ENCODE measurements at regions of chr1 and their contacts with region 1.

Region 1: GRCh38 chr1:27689423-27690173 is 17.6 kb upstream of the IFI6 start:
- DNase-seq: peak; percentile 60
- ATAC-seq: peak; percentile 88
- H3K4me3 ChIP-seq: peak overlapping the region; percentile 33; the same call in 1 of the 2 replicates
- H3K27ac ChIP-seq: peak overlapping the region; percentile 57
- H3K4me1 ChIP-seq: peaks cover 10% of the 10 kb centered on the region
- H3K27me3 ChIP-seq: no peaks in the 10 kb centered on the region
- CTCF ChIP-seq: no peak
- EP300 ChIP-seq: peak in 1 of 2 experiments; percentile 13; a peak in 1 of 4 replicates
- POLR2A ChIP-seq: no peak
- RAD21 ChIP-seq: no peak

Region 2: DNA sequence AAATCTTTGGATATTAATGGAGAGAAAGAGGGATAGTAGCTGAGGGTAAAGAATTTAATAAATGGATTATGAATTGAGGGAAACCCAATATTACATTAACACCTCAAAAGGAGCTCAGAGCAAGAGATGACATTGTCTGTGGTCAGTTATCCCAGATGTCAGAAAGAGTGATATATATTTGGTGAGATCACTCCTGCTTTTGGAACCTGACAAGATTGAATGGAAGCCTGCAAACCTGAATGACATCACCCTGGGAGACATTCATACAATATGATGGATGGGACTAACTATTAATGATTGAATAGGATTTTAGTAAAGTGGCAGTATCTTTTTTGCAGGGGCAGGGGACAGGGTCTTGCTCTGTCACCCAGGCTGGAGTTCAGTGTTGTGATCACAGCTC is 10.9 kb before region 1 on chr1:
- CTCF ChIA-PET with region 1: interaction called, 3 read pairs
- POLR2A ChIA-PET with region 1: interaction called, 5 read pairs
- RAD21 ChIA-PET with region 1: no interaction called
- SMC1A ChIA-PET with region 1: interaction called, 11 read pairs
- in situ Hi-C with region 1: no loop called
- intact Hi-C with region 1: no loop called
- DNase-seq: no peak
- ATAC-seq: no peak
- H3K4me3 ChIP-seq: no peak overlapping the region
- H3K27ac ChIP-seq: no peak overlapping the region
- H3K4me1 ChIP-seq: no peaks in the 10 kb centered on the region
- H3K27me3 ChIP-seq: no peaks in the 10 kb centered on the region
- CTCF ChIP-seq: no peak
- EP300 ChIP-seq: no peak
- POLR2A ChIP-seq: no peak
- RAD21 ChIP-seq: no peak

Region 3: DNA sequence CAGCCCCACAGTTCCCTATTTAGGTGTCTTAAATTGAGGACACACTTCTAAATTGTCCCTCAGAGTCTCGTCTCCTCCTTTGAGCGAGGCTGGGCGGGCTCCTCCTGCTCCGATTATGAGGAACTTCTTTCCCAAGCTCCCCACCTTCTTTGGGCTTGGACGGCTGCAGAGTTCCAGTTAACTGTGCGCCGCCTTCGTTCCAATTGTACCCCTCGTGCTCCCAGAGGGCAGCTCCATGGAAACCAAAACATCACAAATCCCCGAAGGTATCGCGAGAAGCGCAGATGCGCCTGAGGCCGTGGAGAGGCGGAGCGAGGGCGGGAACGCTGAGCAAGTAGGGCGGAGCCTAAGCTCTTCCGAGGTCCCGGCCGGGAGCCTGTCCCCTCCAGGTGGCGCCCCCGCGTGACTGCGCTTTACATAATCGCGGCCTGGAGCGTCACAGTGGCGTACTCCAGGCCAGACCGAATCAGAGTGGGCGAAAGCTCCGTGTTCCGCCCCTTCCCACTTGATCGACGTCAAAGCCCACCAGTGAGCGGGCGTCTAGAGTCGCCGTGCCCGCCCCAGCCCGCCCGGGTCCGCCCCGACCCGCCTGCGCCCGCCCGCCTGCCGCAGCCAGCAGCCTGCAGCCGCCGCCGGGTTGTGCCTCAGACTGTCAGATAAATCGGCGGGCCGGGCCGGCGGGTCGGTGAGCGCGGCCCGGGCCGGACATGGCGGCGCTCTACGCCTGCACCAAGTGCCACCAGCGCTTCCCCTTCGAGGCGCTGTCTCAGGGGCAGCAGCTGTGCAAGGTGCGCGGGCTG is 36.0 kb after region 1 on chr1 and contains the start of gene FAM76A:
- CTCF ChIA-PET with region 1: interaction called, 5 read pairs
- POLR2A ChIA-PET with region 1: interaction called, 6 read pairs
- RAD21 ChIA-PET with region 1: interaction called, 12 read pairs
- SMC1A ChIA-PET with region 1: interaction called, 8 read pairs
- in situ Hi-C with region 1: no loop called
- intact Hi-C with region 1: no loop called
- DNase-seq: peak; percentile 97
- ATAC-seq: peak; percentile 98
- H3K4me3 ChIP-seq: peak within 1 kb of the TSS; percentile 77
- H3K27ac ChIP-seq: peak within 1 kb of the TSS; percentile 73
- H3K4me1 ChIP-seq: peaks cover 11% of the 10 kb centered on the region
- H3K27me3 ChIP-seq: no peaks in the 10 kb centered on the region
- CTCF ChIP-seq: peak; percentile 37 to 75 (median 39); a peak in 4 of 6 replicates
- EP300 ChIP-seq: no peak
- POLR2A ChIP-seq: peak; percentile 82
- RAD21 ChIP-seq: no peak; the same call in 1 of the 2 replicates
- polyA plus RNA-seq, gene FAM76A: 7.6 to 13.4 TPM